ENCODE measurements at regions of chr11 and their contacts with region 1.

Region 1: DNA sequence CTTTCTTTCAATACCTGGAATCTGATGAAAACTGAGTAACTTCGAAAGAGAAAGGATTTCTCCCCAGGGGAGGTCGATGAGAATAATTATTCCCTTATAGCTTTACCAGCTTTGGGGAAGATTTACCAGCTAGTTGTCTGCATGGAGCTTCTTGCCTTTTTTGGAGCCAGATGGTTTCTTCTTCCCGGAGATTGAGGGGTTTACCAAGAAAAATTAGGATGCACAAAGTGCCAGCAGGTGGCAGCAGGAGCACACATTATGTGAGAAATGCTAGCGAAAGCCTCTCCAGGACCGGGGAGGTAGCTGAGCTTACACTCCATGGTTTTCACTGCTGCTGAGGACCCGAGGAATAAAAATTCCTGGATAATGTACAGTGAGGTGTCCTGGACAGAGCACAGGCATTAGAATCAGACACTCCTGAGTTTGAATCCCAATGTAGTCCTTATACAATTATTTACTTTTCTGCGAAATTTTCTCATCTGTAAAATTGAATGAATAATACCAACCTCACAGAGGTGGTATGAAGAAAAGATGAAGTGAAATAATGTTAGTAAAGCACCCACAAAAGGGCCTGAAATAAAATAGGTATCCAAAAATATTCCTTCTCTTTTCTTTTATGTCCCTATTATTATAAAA is 46.0 kb upstream of the PARVA start:
- DNase-seq: peak; percentile 82
- H3K4me3 ChIP-seq: no peak overlapping the region
- H3K27ac ChIP-seq: no peak overlapping the region
- H3K4me1 ChIP-seq: no peaks in the 10 kb centered on the region
- H3K27me3 ChIP-seq: no peaks in the 10 kb centered on the region
- CTCF ChIP-seq: peak; percentile 61 to 70
- POLR2A ChIP-seq: no peak

Region 2: GRCh38 chr11:12288212-12288930 is 43.0 kb before region 1 on chr11:
- CTCF ChIA-PET with region 1: interaction called, 102 read pairs
- POLR2A ChIA-PET with region 1: no interaction called
- dilution Hi-C with region 1: no loop called
- intact Hi-C with region 1: loop called (anchors 1 kb)
- DNase-seq: peak; percentile 87
- H3K4me3 ChIP-seq: no peak overlapping the region
- H3K27ac ChIP-seq: peak overlapping the region; percentile 97
- H3K4me1 ChIP-seq: peaks cover 44% of the 10 kb centered on the region
- H3K27me3 ChIP-seq: no peaks in the 10 kb centered on the region
- CTCF ChIP-seq: peak; percentile 96 to 97
- POLR2A ChIP-seq: no peak

Region 3: DNA sequence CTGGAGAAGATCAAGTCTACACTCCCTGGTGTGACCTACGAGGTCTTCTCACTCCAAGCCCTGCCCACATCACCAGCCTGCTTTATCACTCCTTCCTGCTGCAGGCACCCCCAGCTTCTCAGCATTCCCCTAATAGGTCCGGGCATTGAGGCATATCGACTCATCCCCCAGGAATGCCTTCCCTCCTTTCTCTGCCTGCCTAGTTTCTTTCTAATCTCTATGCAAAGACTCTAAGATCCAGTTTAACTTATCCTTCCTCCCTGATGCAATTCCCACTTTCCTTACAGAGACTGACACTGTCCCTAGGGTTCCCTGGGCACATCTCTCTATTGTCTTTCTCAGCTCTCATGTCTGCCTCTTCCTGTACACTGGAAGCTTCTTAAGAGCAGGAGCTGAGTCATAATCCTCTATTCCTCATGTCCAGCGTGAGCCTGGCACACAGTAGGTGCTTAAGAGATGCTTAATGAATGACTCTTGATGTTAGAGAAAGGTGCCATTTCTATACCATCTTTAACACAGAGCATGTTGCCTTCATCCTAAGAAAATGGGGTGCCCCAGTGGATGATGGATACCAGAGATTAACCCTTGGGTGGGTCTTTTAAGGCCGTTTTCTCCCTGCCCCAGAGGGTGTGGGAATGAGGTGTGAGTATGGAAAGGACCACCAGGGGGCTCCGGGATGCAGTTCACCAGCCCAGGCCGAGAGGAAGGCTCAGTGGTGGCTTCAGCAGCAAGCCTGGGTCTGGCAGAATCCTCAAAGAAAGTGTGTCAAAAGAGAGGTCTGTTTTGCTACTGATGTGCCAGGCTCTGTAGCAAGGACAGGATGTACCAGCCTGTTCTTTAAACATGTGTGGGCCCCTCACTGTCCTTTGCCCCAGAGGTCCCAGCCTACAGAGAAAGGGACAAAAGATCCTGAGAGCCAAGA is 80.7 kb after region 1 on chr11:
- CTCF ChIA-PET with region 1: interaction called, 5 read pairs
- POLR2A ChIA-PET with region 1: no interaction called
- dilution Hi-C with region 1: no loop called
- intact Hi-C with region 1: loop called (anchors 1 kb)
- DNase-seq: peak; percentile 82
- H3K4me3 ChIP-seq: no peak overlapping the region
- H3K27ac ChIP-seq: peak overlapping the region; percentile 85
- H3K4me1 ChIP-seq: peaks cover 17% of the 10 kb centered on the region
- H3K27me3 ChIP-seq: no peaks in the 10 kb centered on the region
- CTCF ChIP-seq: peak; percentile 88 to 90
- POLR2A ChIP-seq: peak; percentile 19

Region 4: DNA sequence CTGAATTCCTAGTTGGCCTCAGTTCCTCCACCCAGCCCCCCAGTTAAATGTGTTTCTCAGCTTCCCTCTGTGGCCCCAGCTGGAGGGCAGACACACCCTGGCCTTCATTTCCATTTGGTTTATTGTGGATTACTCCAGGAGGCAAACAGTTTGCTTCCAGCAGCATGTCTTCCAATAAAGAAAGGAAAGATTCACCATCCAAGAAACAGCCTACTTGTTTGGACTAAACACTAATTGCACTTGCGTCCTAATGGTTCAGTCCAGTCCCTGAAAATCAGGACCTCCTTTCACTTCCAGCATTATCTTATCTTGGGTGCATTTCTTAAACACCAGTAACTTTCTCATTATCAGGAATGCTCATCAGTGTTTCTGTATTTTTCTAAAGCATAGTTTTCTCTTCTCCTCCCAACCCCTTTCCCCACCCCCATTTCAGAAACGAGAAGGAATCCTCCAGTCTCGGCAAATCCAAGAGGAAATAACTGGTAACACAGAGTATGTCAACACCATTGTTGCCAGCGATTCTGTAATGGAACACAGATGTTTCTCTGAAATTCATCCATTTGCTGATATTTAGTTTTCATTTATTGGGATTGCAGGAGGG is 176.9 kb after region 1 on chr11:
- CTCF ChIA-PET with region 1: interaction called, 4 read pairs
- POLR2A ChIA-PET with region 1: no interaction called
- dilution Hi-C with region 1: no loop called
- intact Hi-C with region 1: loop called (anchors 10 kb)
- DNase-seq: peak; percentile 70
- H3K4me3 ChIP-seq: no peak overlapping the region
- H3K27ac ChIP-seq: no peak overlapping the region
- H3K4me1 ChIP-seq: peaks cover 17% of the 10 kb centered on the region
- H3K27me3 ChIP-seq: no peaks in the 10 kb centered on the region
- CTCF ChIP-seq: no peak
- POLR2A ChIP-seq: no peak

Region 5: DNA sequence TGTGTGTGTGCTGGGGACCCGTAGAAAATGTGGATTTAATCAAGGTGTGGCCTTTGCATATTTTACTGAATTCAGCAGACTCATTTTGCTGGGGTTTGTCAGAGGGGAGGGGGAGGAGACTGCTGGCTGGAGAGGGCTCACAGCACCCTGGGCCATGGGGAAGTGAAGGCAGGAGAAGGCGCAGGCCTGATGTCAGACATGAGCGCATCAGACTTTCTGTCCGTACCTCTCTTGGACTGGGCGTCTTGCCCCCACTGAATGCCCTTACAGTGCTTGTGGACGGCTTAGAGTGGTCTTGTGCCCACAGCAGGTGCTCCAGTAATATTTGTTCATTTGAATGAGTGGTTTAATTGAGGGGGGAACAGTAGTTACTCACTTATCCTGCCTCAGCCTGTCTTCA is 418.1 kb after region 1 on chr11:
- CTCF ChIA-PET with region 1: no interaction called
- POLR2A ChIA-PET with region 1: no interaction called
- dilution Hi-C with region 1: no loop called
- intact Hi-C with region 1: no loop called
- DNase-seq: no peak
- H3K4me3 ChIP-seq: no peak overlapping the region
- H3K27ac ChIP-seq: no peak overlapping the region
- H3K4me1 ChIP-seq: peaks cover 3% of the 10 kb centered on the region
- H3K27me3 ChIP-seq: no peaks in the 10 kb centered on the region
- CTCF ChIP-seq: no peak
- POLR2A ChIP-seq: no peak

Region 6: GRCh38 chr11:12813371-12814225 is 482.2 kb after region 1 on chr11:
- CTCF ChIA-PET with region 1: interaction called, 10 read pairs
- POLR2A ChIA-PET with region 1: no interaction called
- dilution Hi-C with region 1: no loop called
- intact Hi-C with region 1: no loop called
- DNase-seq: peak; percentile 17
- H3K4me3 ChIP-seq: no peak overlapping the region
- H3K27ac ChIP-seq: no peak overlapping the region
- H3K4me1 ChIP-seq: peaks cover 15% of the 10 kb centered on the region
- H3K27me3 ChIP-seq: no peaks in the 10 kb centered on the region
- CTCF ChIP-seq: no peak
- POLR2A ChIP-seq: no peak

Region 7: DNA sequence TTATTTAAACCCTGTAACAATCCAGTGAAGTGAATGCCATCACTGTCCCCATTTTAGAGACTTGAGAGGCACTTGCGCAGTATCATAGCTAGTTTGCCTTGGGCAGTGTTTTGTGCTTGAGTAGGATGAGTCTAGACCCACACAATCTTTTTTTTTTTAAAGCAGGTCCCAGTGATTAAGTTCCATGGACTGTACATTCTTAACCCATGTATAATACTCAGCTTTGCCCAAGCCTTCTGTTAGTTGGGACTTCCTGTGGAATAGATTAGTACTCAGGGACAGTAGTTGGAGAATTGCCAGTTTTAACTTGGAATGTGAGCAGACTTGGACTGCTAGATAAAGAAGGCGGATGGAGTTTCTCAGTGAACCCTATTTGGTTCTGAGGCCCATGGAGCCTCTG is 569.1 kb after region 1 on chr11:
- CTCF ChIA-PET with region 1: interaction called, 30 read pairs
- POLR2A ChIA-PET with region 1: no interaction called
- dilution Hi-C with region 1: no loop called
- intact Hi-C with region 1: no loop called
- DNase-seq: peak; percentile 50
- H3K4me3 ChIP-seq: no peak overlapping the region
- H3K27ac ChIP-seq: no peak overlapping the region
- H3K4me1 ChIP-seq: peaks cover 16% of the 10 kb centered on the region
- H3K27me3 ChIP-seq: no peaks in the 10 kb centered on the region
- CTCF ChIP-seq: no peak
- POLR2A ChIP-seq: no peak

Region 8: GRCh38 chr11:13343931-13344717 is 1012.8 kb after region 1 on chr11:
- CTCF ChIA-PET with region 1: interaction called, 3 read pairs
- POLR2A ChIA-PET with region 1: no interaction called
- dilution Hi-C with region 1: no loop called
- intact Hi-C with region 1: loop called (anchors 1 kb)
- DNase-seq: peak; percentile 70
- H3K4me3 ChIP-seq: no peak overlapping the region
- H3K27ac ChIP-seq: no peak overlapping the region
- H3K4me1 ChIP-seq: peaks cover 8% of the 10 kb centered on the region
- H3K27me3 ChIP-seq: no peaks in the 10 kb centered on the region
- CTCF ChIP-seq: peak; percentile 73 to 78
- POLR2A ChIP-seq: no peak

Region 9: GRCh38 chr11:13429836-13430235 is 1098.5 kb after region 1 on chr11:
- CTCF ChIA-PET with region 1: no interaction called
- POLR2A ChIA-PET with region 1: no interaction called
- dilution Hi-C with region 1: no loop called
- intact Hi-C with region 1: no loop called
- DNase-seq: no peak
- H3K4me3 ChIP-seq: no peak overlapping the region
- H3K27ac ChIP-seq: no peak overlapping the region
- H3K4me1 ChIP-seq: no peaks in the 10 kb centered on the region
- H3K27me3 ChIP-seq: no peaks in the 10 kb centered on the region
- CTCF ChIP-seq: no peak
- POLR2A ChIP-seq: no peak

Measured in endothelial cell of umbilical vein (primary cell).